Naive thymus-derived CD8-positive, alpha-beta T cell (primary cell): ENCODE measurements at regions of chr9 and their contacts with region 1.

Region 1: DNA sequence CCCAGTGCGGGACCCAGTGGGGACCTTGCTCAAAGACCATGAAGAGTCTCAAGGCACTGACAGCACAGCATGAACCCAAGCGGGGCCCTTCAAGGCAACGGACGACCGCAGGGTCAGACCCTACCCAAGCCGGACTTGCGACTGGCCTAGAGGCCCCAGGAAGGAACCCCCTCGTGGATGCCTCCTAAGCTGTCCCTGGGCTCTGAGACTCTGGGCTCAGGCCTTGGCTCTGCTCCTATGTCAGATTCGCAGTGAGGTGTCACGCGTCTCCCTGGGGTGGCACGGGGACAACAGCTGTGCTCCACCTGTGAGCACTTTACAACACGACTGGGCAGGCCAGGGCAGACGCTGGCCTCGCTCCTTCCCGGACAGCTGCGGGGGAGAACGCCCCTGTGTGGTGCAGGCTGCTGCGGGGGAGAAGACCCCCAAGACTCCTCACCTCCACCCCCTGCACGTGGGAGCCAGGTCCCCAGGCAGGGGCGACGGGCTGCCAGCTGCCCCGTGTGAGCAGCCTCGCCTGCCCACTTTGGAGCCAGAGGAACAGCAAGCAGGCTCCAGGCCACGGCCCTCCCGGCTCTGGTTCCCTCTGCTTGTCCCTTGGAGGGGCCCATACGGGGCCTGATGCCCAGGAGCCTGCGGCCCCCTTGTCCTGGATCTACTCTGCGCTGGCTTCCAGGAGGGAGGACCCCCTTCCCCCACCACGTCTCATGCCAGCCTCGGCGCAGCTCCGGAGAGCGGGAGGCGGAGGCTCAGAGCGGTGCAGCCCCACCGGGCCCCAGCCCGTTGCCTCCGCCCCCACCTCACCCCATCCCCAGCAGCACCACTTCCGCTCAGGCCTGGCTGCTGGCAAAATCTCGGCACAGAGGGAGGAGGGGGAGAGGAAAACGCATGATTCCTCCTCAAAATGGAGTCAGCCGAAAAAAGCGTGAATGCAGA is 36.0 kb downstream of the SARDH start:
- DNase-seq: peak; percentile 47 to 81 (median 60)
- ATAC-seq: peak; percentile 82 to 85
- H3K4me3 Mint-ChIP-seq: peak overlapping the region; percentile 81 to 92 (median 86)
- H3K27ac Mint-ChIP-seq: peak overlapping the region; percentile 91 to 98 (median 96)
- H3K4me1 Mint-ChIP-seq: peaks cover 21 to 60% (median 48%) of the 10 kb centered on the region in 4 donors
- H3K27me3 Mint-ChIP-seq: no peaks in the 10 kb centered on the region

Region 2: GRCh38 chr9:133356391-133357091 is 345.6 kb before region 1 on chr9 and contains the starts of genes SURF1 and SURF2:
- POLR2A ChIA-PET with region 1: no interaction called
- DNase-seq: peak; percentile 78 to 93 (median 86)
- ATAC-seq: peak; percentile 92 to 94
- H3K4me3 Mint-ChIP-seq: peak within 1 kb of the TSS; percentile 82 to 93 (median 86)
- H3K27ac Mint-ChIP-seq: peak within 1 kb of the TSS; percentile 67 to 95 (median 90)
- H3K4me1 Mint-ChIP-seq: peaks cover 20 to 48% (median 32%) of the 10 kb centered on the region in 4 donors
- H3K27me3 Mint-ChIP-seq: no peaks in the 10 kb centered on the region
- polyA plus RNA-seq, gene SURF1: 90.6 to 119 (median 112) TPM
- polyA plus RNA-seq, gene SURF2: 39.8 to 52.0 (median 49.9) TPM

Region 3: DNA sequence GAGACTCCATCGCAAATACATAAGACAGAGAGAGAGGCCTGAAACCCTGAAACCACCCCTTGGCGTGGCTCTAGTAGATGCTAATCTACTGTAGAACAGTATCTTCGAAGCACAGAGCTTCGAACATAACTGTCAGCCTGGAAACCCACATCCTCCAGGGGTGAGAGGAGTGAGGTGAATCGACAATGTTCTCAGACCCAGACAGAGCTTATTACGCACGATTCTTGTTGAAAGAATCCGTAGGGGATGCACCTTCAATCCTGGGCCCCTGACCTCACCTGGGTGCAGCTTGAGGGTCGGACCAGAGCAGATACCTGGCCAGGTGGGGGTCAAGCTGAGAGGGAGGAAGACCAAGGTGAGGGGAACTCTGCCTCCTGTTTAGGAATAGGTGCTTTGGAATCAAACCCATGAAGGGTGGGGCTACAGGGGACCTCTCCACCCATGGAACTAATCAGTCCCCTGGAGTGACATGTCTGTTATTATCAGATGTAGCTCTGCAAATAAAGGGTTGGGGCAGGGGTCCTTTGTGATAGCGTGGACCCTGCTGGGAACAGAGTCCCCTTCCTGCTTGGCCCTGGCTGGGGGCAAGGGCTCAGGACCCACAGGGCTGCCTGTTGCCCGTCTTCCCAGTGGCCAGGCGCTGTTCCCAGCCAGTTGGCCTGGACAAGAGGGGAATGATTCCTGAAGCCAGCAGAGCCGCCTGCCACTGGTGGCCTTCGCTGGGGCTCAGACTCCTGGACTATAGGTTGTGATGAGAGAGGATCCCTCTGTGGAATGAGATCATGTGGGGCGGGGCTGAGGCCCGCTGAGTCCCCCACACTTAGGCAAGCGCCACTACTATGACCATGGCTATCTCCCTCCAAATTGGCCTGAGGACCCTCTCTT is 24.8 kb before region 1 on chr9:
- POLR2A ChIA-PET with region 1: interaction called, 131 read pairs
- DNase-seq: peak; percentile 30 to 89 (median 78)
- ATAC-seq: peak; percentile 98 to 99
- H3K4me3 Mint-ChIP-seq: peak overlapping the region in 8 of 10 donors; percentile 42 to 76 (median 57)
- H3K27ac Mint-ChIP-seq: peak overlapping the region; percentile 94 to 100 (median 98)
- H3K4me1 Mint-ChIP-seq: peaks cover 14 to 42% (median 37%) of the 10 kb centered on the region in 4 donors
- H3K27me3 Mint-ChIP-seq: no peaks in the 10 kb centered on the region

Region 4: GRCh38 chr9:133683586-133684120 is 18.5 kb before region 1 on chr9:
- POLR2A ChIA-PET with region 1: interaction called, 131 read pairs
- DNase-seq: peak; percentile 43 to 85 (median 72)
- ATAC-seq: peak; percentile 85 to 86
- H3K4me3 Mint-ChIP-seq: peak overlapping the region; percentile 40 to 90 (median 83)
- H3K27ac Mint-ChIP-seq: peak overlapping the region; percentile 97 to 100 (median 100)
- H3K4me1 Mint-ChIP-seq: peaks cover 19 to 31% (median 27%) of the 10 kb centered on the region in 4 donors
- H3K27me3 Mint-ChIP-seq: no peaks in the 10 kb centered on the region